ENCODE measurements at regions of chr7 and their contacts with region 1.

Region 1: GRCh38 chr7:73738612-73739374 is at the start of gene ABHD11:
- DNase-seq: peak; percentile 89 to 100
- H3K4me3 ChIP-seq: peak within 1 kb of the TSS; percentile 96
- H3K27ac ChIP-seq: peak within 1 kb of the TSS; percentile 100
- H3K4me1 ChIP-seq: peaks cover 71% of the 10 kb centered on the region
- H3K27me3 ChIP-seq: no peaks in the 10 kb centered on the region
- CTCF ChIP-seq: no peak
- total RNA-seq, gene ABHD11: 74.4 and 92.6 TPM in 2 replicates

Region 2: GRCh38 chr7:73758581-73759138 is 19.9 kb after region 1 on chr7:
- CTCF ChIA-PET with region 1: no interaction called
- POLR2A ChIA-PET with region 1: interaction called, 10 read pairs
- intact Hi-C with region 1: no loop called
- DNase-seq: no peak
- H3K4me3 ChIP-seq: no peak overlapping the region
- H3K27ac ChIP-seq: no peak overlapping the region
- H3K4me1 ChIP-seq: no peaks in the 10 kb centered on the region
- H3K27me3 ChIP-seq: no peaks in the 10 kb centered on the region
- CTCF ChIP-seq: no peak

Region 3: GRCh38 chr7:73792594-73793292 is 54.0 kb after region 1 on chr7:
- CTCF ChIA-PET with region 1: no interaction called
- POLR2A ChIA-PET with region 1: interaction called, 7 read pairs
- intact Hi-C with region 1: loop called (anchors 1 kb)
- DNase-seq: peak; percentile 70 to 93
- H3K4me3 ChIP-seq: no peak overlapping the region
- H3K27ac ChIP-seq: peak overlapping the region; percentile 80
- H3K4me1 ChIP-seq: peaks cover 29% of the 10 kb centered on the region
- H3K27me3 ChIP-seq: no peaks in the 10 kb centered on the region
- CTCF ChIP-seq: no peak

Region 4: GRCh38 chr7:73828107-73828803 is 89.5 kb after region 1 on chr7:
- CTCF ChIA-PET with region 1: interaction called, 7 read pairs
- POLR2A ChIA-PET with region 1: interaction called, 80 read pairs
- intact Hi-C with region 1: loop called (anchors 1 kb)
- DNase-seq: peak; percentile 92 to 99
- H3K4me3 ChIP-seq: peak overlapping the region; percentile 58; the same call in 1 of the 2 replicates
- H3K27ac ChIP-seq: peak overlapping the region; percentile 99
- H3K4me1 ChIP-seq: peaks cover 69% of the 10 kb centered on the region
- H3K27me3 ChIP-seq: no peaks in the 10 kb centered on the region
- CTCF ChIP-seq: no peak

Region 5: DNA sequence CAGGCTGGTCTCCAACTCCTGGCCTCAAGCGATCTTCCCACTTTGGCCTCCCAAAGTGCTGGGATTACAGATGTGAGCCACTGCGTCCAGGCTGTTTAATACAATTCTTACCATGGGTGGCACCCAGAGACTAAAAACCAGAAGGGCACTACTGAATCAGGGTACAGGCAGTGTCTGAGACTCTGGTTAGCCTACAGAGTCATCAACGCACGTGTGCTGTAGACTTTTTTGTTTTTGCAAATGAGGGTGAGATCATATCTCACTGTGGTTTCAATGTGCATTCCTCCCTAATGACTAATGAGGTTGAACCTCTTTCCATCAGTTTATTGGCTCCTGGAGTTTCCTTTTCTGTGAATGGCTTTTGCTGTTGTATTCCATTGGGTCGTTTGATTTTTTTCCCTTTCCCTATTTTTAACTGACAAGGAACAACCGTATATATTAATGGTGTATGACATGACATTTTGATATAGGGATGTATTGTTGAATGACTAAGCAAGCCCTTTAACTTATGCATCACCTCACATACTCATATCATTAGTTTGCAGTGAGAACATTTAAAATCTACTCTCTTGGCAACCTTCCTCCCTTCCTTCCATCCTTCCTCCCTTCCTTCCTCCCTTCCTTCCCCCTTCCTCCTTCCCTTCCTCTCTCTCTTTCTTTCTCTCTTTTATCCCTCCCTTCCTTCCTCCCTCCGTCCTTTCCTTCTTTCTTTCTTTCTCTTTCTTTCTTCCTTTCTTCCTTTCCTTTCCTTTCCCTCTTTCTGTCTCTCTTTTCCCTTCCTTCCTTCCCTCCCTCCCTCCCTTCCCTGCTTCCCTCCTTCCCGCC is 112.8 kb after region 1 on chr7:
- CTCF ChIA-PET with region 1: interaction called, 3 read pairs
- POLR2A ChIA-PET with region 1: interaction called, 9 read pairs
- intact Hi-C with region 1: loop called (anchors 1 kb)
- DNase-seq: peak; percentile 65 to 99
- H3K4me3 ChIP-seq: peak overlapping the region; percentile 22; the same call in 1 of the 2 replicates
- H3K27ac ChIP-seq: peak overlapping the region; percentile 99
- H3K4me1 ChIP-seq: peaks cover 57% of the 10 kb centered on the region
- H3K27me3 ChIP-seq: no peaks in the 10 kb centered on the region
- CTCF ChIP-seq: 0 out of 2 replicates have a peak, but pooled peaks have one; percentile 11

Measured in PC-9 (cell line).